ENCODE measurements at regions of chr7 and their contacts with region 1.

Region 1: GRCh38 chr7:50206453-50207250 is 97.9 kb upstream of the IKZF1 start:
- DNase-seq: no peak
- H3K4me3 ChIP-seq: no peak overlapping the region
- H3K27ac ChIP-seq: no peak overlapping the region
- H3K4me1 ChIP-seq: no peaks in the 10 kb centered on the region
- H3K27me3 ChIP-seq: no peaks in the 10 kb centered on the region
- CTCF ChIP-seq: no peak
- EP300 ChIP-seq: no peak
- RAD21 ChIP-seq: no peak

Region 2: GRCh38 chr7:50142425-50143017 is 64.1 kb before region 1 on chr7:
- CTCF ChIA-PET with region 1: interaction called, 14 read pairs
- POLR2A ChIA-PET with region 1: no interaction called
- DNase-seq: no peak
- H3K4me3 ChIP-seq: no peak overlapping the region; a peak in 1 of 4 replicates
- H3K27ac ChIP-seq: no peak overlapping the region
- H3K4me1 ChIP-seq: no peaks in the 10 kb centered on the region
- H3K27me3 ChIP-seq: no peaks in the 10 kb centered on the region
- CTCF ChIP-seq: peak; percentile 93
- EP300 ChIP-seq: no peak
- RAD21 ChIP-seq: peak; percentile 82

Region 3: DNA sequence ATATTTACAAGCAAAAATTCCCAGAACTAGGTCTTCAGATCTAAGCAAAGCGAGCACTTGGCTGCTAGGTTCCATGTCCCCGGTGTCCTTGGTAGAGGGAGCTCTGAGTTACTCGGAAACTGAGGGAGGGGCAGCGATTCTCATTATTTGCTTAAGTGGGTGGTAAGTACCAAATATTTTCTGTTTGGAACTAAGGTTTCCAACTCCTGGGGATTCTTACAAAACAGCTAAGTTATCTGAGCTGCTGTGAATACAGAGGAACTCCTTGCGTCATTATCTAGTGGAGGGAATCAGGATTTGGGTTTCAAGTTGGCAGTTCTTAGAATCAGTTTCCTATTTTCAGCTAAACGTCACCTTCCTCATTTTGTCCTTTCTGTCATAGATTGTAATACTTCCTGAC is 21.1 kb after region 1 on chr7:
- CTCF ChIA-PET with region 1: interaction called, 11 read pairs
- POLR2A ChIA-PET with region 1: no interaction called
- DNase-seq: no peak
- H3K4me3 ChIP-seq: no peak overlapping the region
- H3K27ac ChIP-seq: no peak overlapping the region
- H3K4me1 ChIP-seq: peaks cover 0 to 2% of the 10 kb centered on the region in 2 experiments; a peak in 1 of 4 replicates
- H3K27me3 ChIP-seq: no peaks in the 10 kb centered on the region
- CTCF ChIP-seq: no peak
- EP300 ChIP-seq: no peak
- RAD21 ChIP-seq: no peak

Region 4: GRCh38 chr7:50335795-50336754 is 129.4 kb after region 1 on chr7:
- CTCF ChIA-PET with region 1: interaction called, 15 read pairs
- POLR2A ChIA-PET with region 1: no interaction called
- DNase-seq: peak; percentile 78
- H3K4me3 ChIP-seq: no peak overlapping the region
- H3K27ac ChIP-seq: no peak overlapping the region
- H3K4me1 ChIP-seq: peaks cover 5 to 22% of the 10 kb centered on the region in 2 experiments; a peak in 2 of 4 replicates
- H3K27me3 ChIP-seq: no peaks in the 10 kb centered on the region
- CTCF ChIP-seq: no peak
- EP300 ChIP-seq: peak in 1 of 2 experiments; percentile 84; a peak in 2 of 4 replicates
- RAD21 ChIP-seq: peak; percentile 69

Region 5: DNA sequence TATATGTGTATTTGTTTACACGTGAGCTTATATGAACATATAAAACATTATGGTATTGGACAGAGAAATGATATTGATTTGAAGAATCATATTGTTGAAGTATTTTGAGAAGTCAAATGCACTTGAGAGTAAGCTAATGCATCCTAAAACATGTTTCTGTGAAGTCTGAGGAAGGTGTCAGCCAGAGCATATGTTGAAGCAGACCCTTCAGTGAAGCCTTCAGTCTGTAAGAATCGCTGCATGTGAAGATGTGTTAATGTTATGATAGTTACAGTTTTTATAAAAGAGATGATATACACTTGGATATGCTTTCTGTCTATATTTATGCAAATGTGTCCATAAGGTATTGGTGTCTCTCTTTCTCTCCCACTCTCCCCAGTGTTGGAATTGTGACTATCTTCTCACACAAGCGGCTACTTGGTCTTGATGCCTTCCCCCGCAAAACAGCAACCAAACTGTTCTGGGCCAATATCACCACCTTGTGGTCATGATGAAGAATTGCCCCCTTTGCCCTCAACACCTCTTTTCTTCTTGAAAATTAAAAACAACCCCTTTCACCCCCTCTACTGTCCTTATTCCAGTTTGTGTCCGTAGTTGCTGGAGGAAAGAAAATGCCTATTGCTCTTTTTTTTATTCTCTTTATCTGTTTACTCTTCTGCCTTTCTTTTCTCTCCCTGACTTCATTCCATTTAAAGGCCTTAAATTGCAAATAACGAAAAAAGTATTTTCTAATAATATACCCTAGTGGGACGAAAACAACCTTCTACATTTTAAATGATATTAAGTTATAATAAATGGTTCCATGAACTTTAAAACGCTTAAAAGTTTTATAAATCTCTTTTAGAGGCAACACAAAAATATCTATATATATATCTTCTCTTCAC is 162.7 kb after region 1 on chr7:
- CTCF ChIA-PET with region 1: interaction called, 37 read pairs
- POLR2A ChIA-PET with region 1: no interaction called
- DNase-seq: peak; percentile 57
- H3K4me3 ChIP-seq: no peak overlapping the region; a peak in 1 of 4 replicates
- H3K27ac ChIP-seq: no peak overlapping the region
- H3K4me1 ChIP-seq: no peaks in the 10 kb centered on the region
- H3K27me3 ChIP-seq: 0 out of 2 replicates have a peak, but pooled peaks cover 5% of the 10 kb centered on the region
- CTCF ChIP-seq: peak; percentile 51
- EP300 ChIP-seq: no peak
- RAD21 ChIP-seq: peak; percentile 74

Region 6: DNA sequence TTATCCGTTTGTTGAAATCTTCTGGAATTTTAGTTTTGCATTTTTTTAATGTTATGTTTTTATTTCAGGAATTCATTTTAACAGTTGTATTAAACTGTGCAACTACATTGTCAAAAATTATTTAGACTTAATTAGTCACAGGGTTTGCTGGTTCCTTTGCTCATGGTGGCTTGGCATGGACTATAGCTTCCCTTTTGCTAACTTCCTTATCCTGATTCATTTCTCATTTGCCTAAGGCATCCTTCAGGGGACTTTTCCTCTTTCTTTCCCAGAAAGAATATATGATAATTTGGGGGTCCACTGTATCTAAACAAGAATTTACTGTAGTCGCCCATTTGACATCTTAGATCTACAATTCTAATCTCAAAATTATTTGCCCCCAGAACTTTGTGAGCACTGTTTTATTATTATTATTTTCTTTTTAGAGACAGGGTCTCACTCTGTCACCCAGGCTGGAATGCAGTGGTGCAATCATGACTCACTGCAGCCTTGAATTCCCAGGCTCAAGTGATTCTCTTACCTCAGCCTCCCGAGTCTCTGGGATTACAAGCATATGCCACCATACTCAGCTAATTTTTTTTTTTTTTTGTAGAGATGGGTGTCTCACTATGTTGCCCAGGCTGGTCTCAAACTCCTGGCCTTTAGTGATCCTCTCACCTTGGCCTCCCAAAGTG is 229.6 kb after region 1 on chr7:
- CTCF ChIA-PET with region 1: interaction called, 15 read pairs
- POLR2A ChIA-PET with region 1: no interaction called
- DNase-seq: no peak
- H3K4me3 ChIP-seq: no peak overlapping the region
- H3K27ac ChIP-seq: peak overlapping the region in 1 of 2 experiments; percentile 54; a peak in 2 of 4 replicates
- H3K4me1 ChIP-seq: peaks cover 0 to 11% of the 10 kb centered on the region in 2 experiments; a peak in 2 of 4 replicates
- H3K27me3 ChIP-seq: no peaks in the 10 kb centered on the region
- CTCF ChIP-seq: no peak
- EP300 ChIP-seq: no peak
- RAD21 ChIP-seq: no peak

Measured in SK-N-SH (cell line).